Heart right ventricle (tissue), 16 donors: ENCODE measurements at regions of chr6 and their contacts with region 1.

Region 1: GRCh38 chr6:63352587-63353285 is 33.0 kb upstream of the LGSN start:
- DNase-seq: peak in 1 of 2 donors; percentile 21
- ATAC-seq: peak in 7 of 8 donors; percentile 72 to 88 (median 76)
- H3K4me3 ChIP-seq: peak overlapping the region in 3 of 10 donors; percentile 1 to 23 (median 19)
- H3K27ac ChIP-seq: peak overlapping the region in 3 of 10 donors; percentile 48 to 81 (median 51)
- H3K4me1 ChIP-seq: peaks cover 0 to 13% (median 0%) of the 10 kb centered on the region in 9 donors
- H3K27me3 ChIP-seq: no peaks in the 10 kb centered on the region
- CTCF ChIP-seq: peak in 8 of 9 donors; percentile 20 to 71 (median 61)

Region 2: DNA sequence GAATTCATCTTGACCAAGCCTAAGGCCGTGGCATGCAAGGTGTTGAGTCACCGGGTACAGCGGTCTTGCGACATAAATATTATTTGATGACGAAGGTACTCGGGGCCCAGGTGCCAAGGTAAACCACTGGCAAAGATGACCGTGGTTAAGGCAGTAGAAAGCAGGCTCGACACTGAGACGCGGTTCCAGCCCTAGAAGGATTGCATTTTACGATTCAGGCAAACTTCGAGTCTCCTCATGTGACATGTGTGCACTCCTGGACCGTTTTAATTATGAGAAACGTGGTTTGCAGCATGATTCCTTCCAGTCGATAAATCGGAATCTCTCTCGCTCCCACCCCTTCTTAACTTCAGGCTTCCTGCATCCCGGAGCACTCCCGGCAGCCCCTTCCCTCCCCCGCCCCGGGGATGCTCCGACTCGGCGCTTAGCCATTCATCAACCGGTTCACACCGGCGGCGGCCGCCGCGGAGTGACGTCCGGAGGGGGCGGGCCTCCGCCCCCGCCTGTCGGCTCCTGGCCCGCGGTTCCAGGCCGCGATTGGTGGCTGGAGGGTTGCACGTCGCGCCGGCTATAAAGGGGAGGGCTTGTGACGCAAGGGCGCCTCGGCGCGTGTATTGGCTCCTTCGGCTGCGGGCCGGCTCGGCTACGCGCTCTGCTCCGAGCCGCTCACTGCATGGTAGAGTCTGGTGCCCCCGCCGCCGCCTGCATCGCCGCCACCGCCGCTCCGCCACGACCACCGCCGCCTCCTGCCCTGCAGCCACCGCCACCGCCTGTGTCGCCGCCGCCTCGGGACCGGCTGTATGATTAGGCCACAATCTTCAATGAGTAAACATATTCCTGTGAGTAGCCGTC is 219.4 kb after region 1 on chr6 and contains the starts of genes LOC128125822 and PTP4A1:
- intact Hi-C with region 1: loop called in 4 of 10 experiments (anchors 5 to 10 kb)
- DNase-seq: peak; percentile 96 to 98
- ATAC-seq: peak; percentile 97 to 100 (median 98)
- H3K4me3 ChIP-seq: peak within 1 kb of the TSS; percentile 77 to 97 (median 94)
- H3K27ac ChIP-seq: peak within 1 kb of the TSS; percentile 95 to 100 (median 99)
- H3K4me1 ChIP-seq: peaks cover 0 to 39% (median 24%) of the 10 kb centered on the region in 9 donors
- H3K27me3 ChIP-seq: no peaks in the 10 kb centered on the region
- CTCF ChIP-seq: no peak
- total RNA-seq, gene PTP4A1: 30.0 to 69.9 (median 51.3) TPM

Region 3: DNA sequence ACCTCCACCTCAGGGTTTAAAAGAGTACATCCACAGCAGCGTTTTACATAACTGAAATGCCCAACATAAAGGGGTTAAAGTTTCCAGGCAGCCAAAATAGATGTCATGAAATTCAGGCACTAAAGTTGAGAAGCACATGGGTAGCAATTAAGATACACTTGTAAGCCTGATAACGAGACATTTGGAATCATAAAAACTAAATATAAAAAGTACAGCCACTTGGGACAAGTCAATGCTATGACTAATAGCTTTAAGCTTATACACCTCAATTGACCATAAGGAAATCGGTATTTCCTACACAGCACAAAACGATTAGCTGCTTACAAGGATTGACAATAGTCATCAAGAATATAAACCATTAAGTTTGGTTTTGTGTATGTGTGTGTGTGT is 231.4 kb after region 1 on chr6:
- intact Hi-C with region 1: loop called in 3 of 10 experiments (anchors 10 kb)
- DNase-seq: no peak
- ATAC-seq: peak in 7 of 8 donors; percentile 38 to 78 (median 71)
- H3K4me3 ChIP-seq: no peak overlapping the region
- H3K27ac ChIP-seq: no peak overlapping the region
- H3K4me1 ChIP-seq: peaks cover 0 to 6% (median 0%) of the 10 kb centered on the region in 9 donors
- H3K27me3 ChIP-seq: no peaks in the 10 kb centered on the region
- CTCF ChIP-seq: no peak

Region 4: GRCh38 chr6:63598049-63599036 is 245.6 kb after region 1 on chr6:
- intact Hi-C with region 1: loop called in 3 of 10 experiments (anchors 10 kb)
- DNase-seq: peak; percentile 49 to 63
- ATAC-seq: peak; percentile 86 to 98 (median 94)
- H3K4me3 ChIP-seq: peak overlapping the region; percentile 30 to 61 (median 56)
- H3K27ac ChIP-seq: peak overlapping the region in 1 of 10 donors; percentile 16
- H3K4me1 ChIP-seq: peaks cover 0 to 16% (median 6%) of the 10 kb centered on the region in 9 donors
- H3K27me3 ChIP-seq: peaks cover 0 to 8% (median 0%) of the 10 kb centered on the region in 7 donors
- CTCF ChIP-seq: peak; percentile 68 to 90 (median 85)

Region 5: GRCh38 chr6:63764318-63764916 is 411.7 kb after region 1 on chr6:
- intact Hi-C with region 1: loop called (anchors 2 to 10 kb)
- DNase-seq: no peak
- ATAC-seq: no peak
- H3K4me3 ChIP-seq: no peak overlapping the region
- H3K27ac ChIP-seq: no peak overlapping the region
- H3K4me1 ChIP-seq: no peaks in the 10 kb centered on the region
- H3K27me3 ChIP-seq: peaks cover 0 to 7% (median 0%) of the 10 kb centered on the region in 7 donors
- CTCF ChIP-seq: peak; percentile 47 to 80 (median 74)